HEK293T (cell line): ENCODE measurements at regions of chr13 and their contacts with region 1.

Region 1: GRCh38 chr13:80865329-80865728 is 524.4 kb upstream of the SPRY2 start:
- DNase-seq: no peak

Region 2: GRCh38 chr13:80654638-80655249 is 210.6 kb before region 1 on chr13:
- CTCF ChIA-PET with region 1: no interaction called
- POLR2A ChIA-PET with region 1: no interaction called
- DNase-seq: no peak

Region 3: DNA sequence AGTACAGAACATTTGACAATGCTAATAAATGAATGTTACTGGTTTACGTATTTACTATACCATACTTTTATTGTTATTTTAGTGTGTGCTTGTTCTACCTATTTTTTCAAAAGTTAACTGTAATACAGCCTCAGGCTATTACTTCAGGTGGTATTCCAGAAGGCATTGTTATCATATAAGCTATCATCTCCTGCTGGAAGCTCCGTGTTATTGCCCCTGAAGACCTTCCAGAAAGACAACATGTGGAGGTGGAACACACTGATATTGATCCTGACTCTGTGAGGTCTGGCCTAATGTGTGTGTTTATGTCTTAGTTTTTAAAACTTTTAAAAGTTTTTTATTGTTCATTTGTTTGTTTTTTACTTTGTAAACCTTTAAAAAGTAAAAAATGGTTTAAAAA is 14.6 kb before region 1 on chr13:
- CTCF ChIA-PET with region 1: no interaction called
- POLR2A ChIA-PET with region 1: no interaction called
- DNase-seq: no peak

Region 4: GRCh38 chr13:80881942-80882445 is 16.7 kb after region 1 on chr13:
- CTCF ChIA-PET with region 1: no interaction called
- POLR2A ChIA-PET with region 1: no interaction called
- DNase-seq: peak; percentile 76

Region 5: GRCh38 chr13:80928241-80928640 is 62.9 kb after region 1 on chr13:
- CTCF ChIA-PET with region 1: interaction called, 11 read pairs
- POLR2A ChIA-PET with region 1: no interaction called
- DNase-seq: no peak